Activated T-helper 1 cell treated with anti-CD3 and anti-CD28 coated beads, Interleukin-12 subunit alpha, Interleukin-12 subunit beta, Interleukin-2, Interleukin-4 antibody, amounts not matched to agents 30 ng/mL and 10 ng/mL and 1 ng/mL, durations not matched to agents 14 hours and 24 hours and 36 hours (primary cell): ENCODE measurements at regions of chr6 and their contacts with region 1.

Region 1: DNA sequence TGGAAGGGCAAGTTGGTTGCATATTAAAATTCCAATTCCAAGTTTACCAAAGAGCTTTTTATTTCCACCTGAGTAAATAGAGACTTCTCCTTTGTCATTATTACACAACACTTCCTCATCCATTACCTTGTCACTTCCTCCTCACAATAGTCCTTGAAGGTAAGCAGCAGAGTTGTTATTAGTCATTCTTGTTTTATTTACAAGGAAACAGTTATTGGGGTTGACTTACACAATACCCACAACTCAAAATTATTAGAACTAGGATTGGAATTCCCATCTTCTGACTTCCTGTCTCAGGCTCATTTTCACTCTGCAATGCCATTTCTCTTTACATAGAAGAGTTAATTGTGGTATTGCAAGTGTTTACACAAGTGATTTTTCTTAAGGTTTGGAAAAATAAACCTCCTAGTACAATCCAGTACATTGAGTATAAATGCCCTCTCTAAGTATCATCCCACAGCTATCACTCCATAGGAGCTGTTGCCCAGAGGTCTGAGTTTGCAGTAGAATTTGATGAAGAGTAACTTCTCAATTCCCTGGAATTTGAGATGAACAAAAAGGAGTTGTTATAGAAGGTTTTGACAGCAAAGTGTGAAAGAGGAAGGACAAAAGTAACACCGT is 28.9 kb upstream of the MTRF1L start:
- DNase-seq: no peak
- H3K4me3 Mint-ChIP-seq: no peak overlapping the region
- H3K27ac Mint-ChIP-seq: no peak overlapping the region
- H3K4me1 Mint-ChIP-seq: no peaks in the 10 kb centered on the region
- H3K27me3 Mint-ChIP-seq: peaks cover 32% of the 10 kb centered on the region

Region 2: GRCh38 chr6:153312641-153313040 is 281.2 kb after region 1 on chr6:
- intact Hi-C with region 1: loop called (anchors 2 kb)
- DNase-seq: peak; percentile 1
- H3K4me3 Mint-ChIP-seq: no peak overlapping the region
- H3K27ac Mint-ChIP-seq: no peak overlapping the region
- H3K4me1 Mint-ChIP-seq: no peaks in the 10 kb centered on the region
- H3K27me3 Mint-ChIP-seq: no peaks in the 10 kb centered on the region